ENCODE measurements at regions of chr12 and their contacts with region 1.

Region 1: DNA sequence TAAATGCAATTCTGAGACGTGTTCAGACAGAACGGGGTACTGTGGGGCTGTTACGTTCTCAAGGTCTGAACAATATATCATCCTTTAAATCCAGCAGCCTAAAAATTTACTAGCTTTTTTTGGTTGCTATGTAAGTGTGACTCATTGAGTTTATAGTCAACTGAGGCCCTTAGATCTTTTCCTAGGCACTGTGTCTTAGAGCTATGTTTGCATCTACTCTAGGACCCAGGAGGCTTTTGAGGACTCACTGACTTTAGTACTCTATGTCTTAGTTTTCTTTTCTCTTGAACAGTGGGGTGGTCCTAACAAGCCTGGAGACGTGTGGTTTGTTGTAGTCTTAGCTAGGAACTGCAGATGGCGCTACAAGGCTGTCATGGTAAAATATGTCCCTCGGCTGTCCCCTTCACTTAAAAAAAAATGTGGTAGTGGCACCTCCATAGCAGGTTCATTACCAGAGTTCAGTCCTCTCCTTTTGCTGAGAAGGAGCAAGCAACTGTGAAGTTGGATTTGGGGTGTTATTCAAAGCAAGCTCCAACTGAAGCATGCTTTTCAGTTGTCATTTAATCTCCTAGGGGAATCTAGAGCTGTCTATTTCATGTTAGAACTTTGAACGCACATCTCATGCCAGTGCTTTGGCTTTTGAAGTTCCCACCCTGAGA is 8.7 kb upstream of the SPATS2 start:
- DNase-seq: peak; percentile 77 to 80
- H3K4me3 ChIP-seq: no peak overlapping the region
- H3K4me3 Mint-ChIP-seq: no peak overlapping the region
- H3K27ac Mint-ChIP-seq: no peak overlapping the region
- H3K4me1 ChIP-seq: no peaks in the 10 kb centered on the region
- H3K4me1 Mint-ChIP-seq: peaks cover 9% of the 10 kb centered on the region
- H3K27me3 ChIP-seq: no peaks in the 10 kb centered on the region
- H3K27me3 Mint-ChIP-seq: no peaks in the 10 kb centered on the region
- CTCF ChIP-seq: peak; percentile 87 to 91

Region 2: GRCh38 chr12:49244176-49244575 is 114.4 kb before region 1 on chr12:
- CTCF ChIA-PET with region 1: no interaction called
- POLR2A ChIA-PET with region 1: no interaction called
- intact Hi-C with region 1: no loop called
- DNase-seq: no peak
- H3K4me3 ChIP-seq: no peak overlapping the region
- H3K4me3 Mint-ChIP-seq: no peak overlapping the region
- H3K27ac Mint-ChIP-seq: no peak overlapping the region
- H3K4me1 ChIP-seq: peaks cover 6% of the 10 kb centered on the region
- H3K4me1 Mint-ChIP-seq: no peaks in the 10 kb centered on the region
- H3K27me3 ChIP-seq: no peaks in the 10 kb centered on the region
- H3K27me3 Mint-ChIP-seq: no peaks in the 10 kb centered on the region
- CTCF ChIP-seq: no peak

Region 3: GRCh38 chr12:49264738-49265515 is 93.7 kb before region 1 on chr12 and contains the start of gene TUBA1C:
- CTCF ChIA-PET with region 1: no interaction called
- POLR2A ChIA-PET with region 1: no interaction called
- intact Hi-C with region 1: no loop called
- DNase-seq: peak; percentile 97 to 99
- H3K4me3 ChIP-seq: peak within 1 kb of the TSS; percentile 79
- H3K4me3 Mint-ChIP-seq: peak within 1 kb of the TSS; percentile 86
- H3K27ac Mint-ChIP-seq: peak within 1 kb of the TSS; percentile 89
- H3K4me1 ChIP-seq: peaks cover 30% of the 10 kb centered on the region
- H3K4me1 Mint-ChIP-seq: peaks cover 22% of the 10 kb centered on the region
- H3K27me3 ChIP-seq: no peaks in the 10 kb centered on the region
- H3K27me3 Mint-ChIP-seq: no peaks in the 10 kb centered on the region
- CTCF ChIP-seq: no peak
- total RNA-seq, gene TUBA1C: 636 and 638 TPM in 2 replicates

Region 4: GRCh38 chr12:49288412-49288853 is 70.2 kb before region 1 on chr12:
- CTCF ChIA-PET with region 1: interaction called, 14 read pairs
- POLR2A ChIA-PET with region 1: interaction called, 3 read pairs
- intact Hi-C with region 1: loop called (anchors 2 kb)
- DNase-seq: peak in 1 of 2 experiments; percentile 75
- H3K4me3 ChIP-seq: no peak overlapping the region
- H3K4me3 Mint-ChIP-seq: no peak overlapping the region
- H3K27ac Mint-ChIP-seq: no peak overlapping the region
- H3K4me1 ChIP-seq: peaks cover 3% of the 10 kb centered on the region; the same call in 1 of the 2 replicates
- H3K4me1 Mint-ChIP-seq: peaks cover 6% of the 10 kb centered on the region
- H3K27me3 ChIP-seq: no peaks in the 10 kb centered on the region
- H3K27me3 Mint-ChIP-seq: peaks cover 3% of the 10 kb centered on the region
- CTCF ChIP-seq: peak; percentile 77 to 96

Region 5: DNA sequence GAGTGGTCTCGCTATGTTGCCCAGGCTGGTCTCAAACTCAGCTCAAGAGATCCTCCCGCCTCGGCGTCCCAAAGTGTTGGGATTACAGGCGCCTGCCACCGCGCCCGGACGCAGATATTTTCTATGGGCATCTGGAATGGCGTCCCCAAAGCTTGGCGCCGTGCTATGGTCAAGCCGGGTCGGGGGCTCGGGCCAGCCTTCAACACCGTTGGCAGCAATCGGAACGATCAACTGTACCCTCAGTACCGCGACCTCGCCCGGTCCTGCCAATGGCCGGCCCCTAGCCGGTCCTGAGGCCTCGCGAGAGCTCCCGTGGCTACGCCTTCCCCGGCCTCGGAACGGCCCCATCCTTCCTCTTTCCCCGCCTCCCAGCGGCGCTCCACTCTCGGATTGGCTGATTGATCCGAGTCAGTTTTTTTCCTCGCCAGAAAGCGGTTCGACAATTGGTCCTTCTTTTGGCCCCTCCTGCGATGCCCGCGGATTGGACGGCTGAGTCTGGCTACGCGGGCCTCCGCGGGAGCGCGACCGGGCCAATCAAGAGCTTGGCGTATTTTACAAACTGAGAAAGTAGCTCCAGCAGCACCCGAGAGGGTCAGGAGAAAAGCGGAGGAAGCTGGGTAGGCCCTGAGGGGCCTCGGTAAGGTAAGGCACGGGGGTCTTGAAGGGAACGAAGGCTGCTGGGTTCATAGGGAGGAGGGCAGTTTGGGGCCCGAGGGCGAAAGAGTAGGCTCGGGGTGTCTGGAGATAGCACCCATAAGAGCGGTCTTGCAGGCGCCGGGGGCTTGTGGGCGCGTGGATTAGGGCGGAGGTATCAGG is 35.7 kb before region 1 on chr12 and contains the start of gene TROAP:
- CTCF ChIA-PET with region 1: interaction called, 16 read pairs
- POLR2A ChIA-PET with region 1: interaction called, 3 read pairs
- intact Hi-C with region 1: no loop called
- DNase-seq: peak; percentile 99 to 100
- H3K4me3 ChIP-seq: peak within 1 kb of the TSS; percentile 89
- H3K4me3 Mint-ChIP-seq: peak within 1 kb of the TSS; percentile 99
- H3K27ac Mint-ChIP-seq: peak within 1 kb of the TSS; percentile 98
- H3K4me1 ChIP-seq: peaks cover 10% of the 10 kb centered on the region; the same call in 1 of the 2 replicates
- H3K4me1 Mint-ChIP-seq: peaks cover 6% of the 10 kb centered on the region
- H3K27me3 ChIP-seq: no peaks in the 10 kb centered on the region
- H3K27me3 Mint-ChIP-seq: no peaks in the 10 kb centered on the region
- CTCF ChIP-seq: no peak
- total RNA-seq, gene TROAP: 134 and 135 TPM in 2 replicates

Region 6: DNA sequence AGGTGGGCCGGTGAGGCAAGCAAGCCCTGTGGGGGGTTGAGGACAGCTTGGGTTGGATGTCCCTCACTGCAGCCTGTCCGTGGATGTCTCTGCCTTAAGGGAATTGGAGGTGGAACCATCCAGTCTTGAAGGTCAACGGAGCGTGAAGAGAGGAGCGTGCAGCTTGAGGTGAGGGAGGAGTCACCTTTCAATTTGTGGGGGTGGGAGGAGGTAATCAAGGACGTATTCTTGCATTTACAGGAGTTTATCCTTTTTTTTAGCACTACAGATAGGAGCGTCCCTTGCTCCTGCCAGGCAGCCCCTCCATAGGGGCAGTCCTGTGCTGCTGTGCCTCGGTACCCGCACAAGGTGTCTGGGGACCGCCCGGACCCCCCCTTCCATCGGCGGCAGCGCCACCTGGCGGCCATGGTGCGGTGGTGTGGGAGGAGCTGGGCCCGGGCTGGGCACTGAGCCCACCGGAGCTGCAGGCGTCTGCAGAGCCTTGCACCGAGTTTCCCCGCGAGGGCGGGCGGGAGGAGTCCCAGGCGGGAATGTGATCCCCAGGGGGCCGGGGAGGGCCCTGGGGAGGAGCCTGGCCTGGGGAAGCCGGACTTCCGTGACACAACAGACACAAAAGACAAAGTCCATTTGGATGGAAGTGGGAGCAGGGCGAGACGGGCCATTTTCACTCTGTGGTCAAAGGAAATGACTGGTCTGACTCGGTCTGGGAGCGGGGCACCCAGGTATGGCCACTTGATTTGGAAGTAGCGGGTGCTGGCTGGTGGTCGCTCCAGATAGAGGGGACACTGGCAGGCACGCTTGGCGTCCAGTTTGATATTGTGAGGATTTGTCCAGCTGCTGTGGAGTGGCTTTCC is 11.0 kb before region 1 on chr12:
- CTCF ChIA-PET with region 1: interaction called, 30 read pairs
- POLR2A ChIA-PET with region 1: interaction called, 3 read pairs
- intact Hi-C with region 1: no loop called
- DNase-seq: peak; percentile 98 to 99
- H3K4me3 ChIP-seq: peak overlapping the region; percentile 43
- H3K4me3 Mint-ChIP-seq: peak overlapping the region; percentile 90
- H3K27ac Mint-ChIP-seq: peak overlapping the region; percentile 98
- H3K4me1 ChIP-seq: peaks cover 16% of the 10 kb centered on the region
- H3K4me1 Mint-ChIP-seq: peaks cover 14% of the 10 kb centered on the region
- H3K27me3 ChIP-seq: no peaks in the 10 kb centered on the region
- H3K27me3 Mint-ChIP-seq: no peaks in the 10 kb centered on the region
- CTCF ChIP-seq: peak; percentile 97 to 98

Region 7: GRCh38 chr12:49515266-49515665 is 156.7 kb after region 1 on chr12:
- CTCF ChIA-PET with region 1: interaction called, 178 read pairs
- POLR2A ChIA-PET with region 1: no interaction called
- intact Hi-C with region 1: loop called (anchors 1 kb)
- DNase-seq: no peak
- H3K4me3 ChIP-seq: no peak overlapping the region
- H3K4me3 Mint-ChIP-seq: no peak overlapping the region
- H3K27ac Mint-ChIP-seq: no peak overlapping the region
- H3K4me1 ChIP-seq: no peaks in the 10 kb centered on the region
- H3K4me1 Mint-ChIP-seq: no peaks in the 10 kb centered on the region
- H3K27me3 ChIP-seq: no peaks in the 10 kb centered on the region
- H3K27me3 Mint-ChIP-seq: no peaks in the 10 kb centered on the region
- CTCF ChIP-seq: no peak

Region 8: GRCh38 chr12:49553512-49554088 is 195.0 kb after region 1 on chr12:
- CTCF ChIA-PET with region 1: interaction called, 16 read pairs
- POLR2A ChIA-PET with region 1: no interaction called
- intact Hi-C with region 1: loop called (anchors 2 kb)
- DNase-seq: peak in 1 of 2 experiments; percentile 65
- H3K4me3 ChIP-seq: no peak overlapping the region
- H3K4me3 Mint-ChIP-seq: no peak overlapping the region
- H3K27ac Mint-ChIP-seq: no peak overlapping the region
- H3K4me1 ChIP-seq: no peaks in the 10 kb centered on the region
- H3K4me1 Mint-ChIP-seq: no peaks in the 10 kb centered on the region
- H3K27me3 ChIP-seq: no peaks in the 10 kb centered on the region
- H3K27me3 Mint-ChIP-seq: no peaks in the 10 kb centered on the region
- CTCF ChIP-seq: peak; percentile 81 to 93

Measured in Caco-2 (cell line).